IMR-90 (cell line): ENCODE measurements at regions of chr1 and their contacts with region 1.

Region 1: GRCh38 chr1:173409613-173410012 is 67.5 kb upstream of the PRDX6 start:
- DNase-seq: peak; percentile 76
- ATAC-seq: 0 out of 2 replicates have a peak, but pooled peaks have one; percentile 15
- H3K4me3 ChIP-seq: no peak overlapping the region
- H3K27ac ChIP-seq: no peak overlapping the region
- H3K4me1 ChIP-seq: peaks cover 10% of the 10 kb centered on the region
- H3K27me3 ChIP-seq: no peaks in the 10 kb centered on the region
- CTCF ChIP-seq: no peak
- POLR2A ChIP-seq: no peak
- RAD21 ChIP-seq: no peak

Region 2: GRCh38 chr1:173241528-173242347 is 167.9 kb before region 1 on chr1:
- CTCF ChIA-PET with region 1: no interaction called
- POLR2A ChIA-PET with region 1: no interaction called
- dilution Hi-C with region 1: no loop called
- in situ Hi-C with region 1: no loop called
- intact Hi-C with region 1: no loop called
- DNase-seq: no peak
- ATAC-seq: no peak
- H3K4me3 ChIP-seq: no peak overlapping the region
- H3K27ac ChIP-seq: no peak overlapping the region
- H3K4me1 ChIP-seq: no peaks in the 10 kb centered on the region
- H3K27me3 ChIP-seq: no peaks in the 10 kb centered on the region
- CTCF ChIP-seq: no peak
- POLR2A ChIP-seq: no peak
- RAD21 ChIP-seq: no peak

Region 3: DNA sequence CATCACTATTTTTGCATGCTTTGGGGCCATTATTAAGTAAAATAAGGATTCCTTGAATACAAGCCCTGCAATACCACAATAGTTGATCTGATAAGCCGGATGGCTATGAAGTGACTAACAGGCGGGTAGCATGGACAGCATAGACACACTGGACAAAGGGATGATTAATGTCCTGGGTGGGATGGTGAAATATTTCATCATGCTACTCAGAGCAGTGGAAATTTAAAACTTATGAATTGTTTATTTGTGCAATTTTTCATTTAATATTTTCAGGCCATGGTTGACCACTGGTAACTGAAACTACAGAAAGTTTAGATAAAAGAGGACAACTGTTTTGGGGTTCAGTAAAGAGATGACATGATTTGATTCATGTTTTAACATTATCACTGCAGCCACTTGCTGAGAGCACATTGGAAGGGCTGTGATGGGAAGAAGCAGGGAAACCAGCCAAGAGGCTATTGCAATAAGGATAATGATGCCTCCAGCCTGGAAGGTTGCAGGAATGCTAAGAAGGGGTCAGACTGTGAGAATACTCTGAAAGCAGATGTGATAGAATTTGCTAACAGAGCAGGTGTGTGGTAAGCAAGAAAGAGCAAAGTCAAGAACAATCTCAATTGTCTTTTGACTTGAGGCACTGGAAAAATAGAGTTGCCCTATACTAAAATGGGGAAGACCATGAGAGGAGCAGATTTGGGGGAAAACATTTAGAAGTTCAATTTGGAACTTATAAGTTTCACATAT is 140.0 kb before region 1 on chr1:
- CTCF ChIA-PET with region 1: no interaction called
- POLR2A ChIA-PET with region 1: no interaction called
- dilution Hi-C with region 1: no loop called
- in situ Hi-C with region 1: no loop called
- intact Hi-C with region 1: loop called (anchors 10 kb)
- DNase-seq: peak; percentile 89
- ATAC-seq: peak; percentile 85
- H3K4me3 ChIP-seq: no peak overlapping the region
- H3K27ac ChIP-seq: no peak overlapping the region
- H3K4me1 ChIP-seq: peaks cover 6% of the 10 kb centered on the region
- H3K27me3 ChIP-seq: no peaks in the 10 kb centered on the region
- CTCF ChIP-seq: no peak
- POLR2A ChIP-seq: no peak
- RAD21 ChIP-seq: no peak

Region 4: GRCh38 chr1:173297798-173298391 is 111.7 kb before region 1 on chr1:
- CTCF ChIA-PET with region 1: no interaction called
- POLR2A ChIA-PET with region 1: no interaction called
- dilution Hi-C with region 1: no loop called
- in situ Hi-C with region 1: no loop called
- intact Hi-C with region 1: loop called (anchors 5 kb)
- DNase-seq: no peak
- ATAC-seq: no peak
- H3K4me3 ChIP-seq: no peak overlapping the region
- H3K27ac ChIP-seq: no peak overlapping the region
- H3K4me1 ChIP-seq: no peaks in the 10 kb centered on the region; the same call in 1 of the 2 replicates
- H3K27me3 ChIP-seq: no peaks in the 10 kb centered on the region
- CTCF ChIP-seq: no peak
- POLR2A ChIP-seq: no peak
- RAD21 ChIP-seq: no peak